Posterior cingulate gyrus (tissue), 11 donors: ENCODE measurements at regions of chr15 and their contacts with region 1.

Region 1: DNA sequence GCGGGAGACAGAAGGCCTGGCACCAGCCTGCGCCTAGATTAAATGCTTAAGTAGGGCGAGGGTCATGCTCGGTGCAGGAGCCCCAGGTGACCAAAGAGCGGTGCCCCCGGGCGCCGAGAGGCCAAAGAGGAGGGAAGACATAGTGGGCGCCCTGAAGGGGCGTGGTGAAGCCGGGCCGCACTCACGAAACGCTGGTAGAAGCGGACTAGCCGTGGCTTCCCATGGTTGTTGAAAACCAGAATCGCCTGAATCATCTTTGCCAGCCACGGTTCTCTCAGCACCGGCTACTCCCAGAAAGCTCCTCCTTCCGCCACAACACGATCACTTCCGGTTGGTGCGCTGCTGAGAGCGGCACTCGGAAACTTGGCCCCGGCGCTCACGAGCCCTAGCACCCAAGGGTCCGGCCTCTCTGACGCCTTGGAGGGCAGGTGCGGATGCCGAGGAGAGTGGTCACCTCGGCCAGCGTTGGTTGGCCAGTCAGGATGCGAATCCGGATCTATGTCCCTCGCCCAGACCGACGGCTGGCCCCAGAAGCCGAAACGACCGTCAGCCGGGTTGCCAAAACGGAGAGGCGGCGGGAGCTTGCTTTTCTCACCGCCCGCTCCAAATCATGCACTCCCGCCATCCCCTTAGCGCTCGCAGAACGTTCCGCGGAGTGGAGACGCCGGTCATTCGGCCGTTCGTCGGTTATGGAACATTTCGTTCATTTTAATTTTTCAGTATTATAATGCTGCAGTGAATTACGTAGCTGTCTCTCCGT is at the start of gene AP3S2:
- DNase-seq: peak; percentile 84 to 98 (median 92)

Region 2: DNA sequence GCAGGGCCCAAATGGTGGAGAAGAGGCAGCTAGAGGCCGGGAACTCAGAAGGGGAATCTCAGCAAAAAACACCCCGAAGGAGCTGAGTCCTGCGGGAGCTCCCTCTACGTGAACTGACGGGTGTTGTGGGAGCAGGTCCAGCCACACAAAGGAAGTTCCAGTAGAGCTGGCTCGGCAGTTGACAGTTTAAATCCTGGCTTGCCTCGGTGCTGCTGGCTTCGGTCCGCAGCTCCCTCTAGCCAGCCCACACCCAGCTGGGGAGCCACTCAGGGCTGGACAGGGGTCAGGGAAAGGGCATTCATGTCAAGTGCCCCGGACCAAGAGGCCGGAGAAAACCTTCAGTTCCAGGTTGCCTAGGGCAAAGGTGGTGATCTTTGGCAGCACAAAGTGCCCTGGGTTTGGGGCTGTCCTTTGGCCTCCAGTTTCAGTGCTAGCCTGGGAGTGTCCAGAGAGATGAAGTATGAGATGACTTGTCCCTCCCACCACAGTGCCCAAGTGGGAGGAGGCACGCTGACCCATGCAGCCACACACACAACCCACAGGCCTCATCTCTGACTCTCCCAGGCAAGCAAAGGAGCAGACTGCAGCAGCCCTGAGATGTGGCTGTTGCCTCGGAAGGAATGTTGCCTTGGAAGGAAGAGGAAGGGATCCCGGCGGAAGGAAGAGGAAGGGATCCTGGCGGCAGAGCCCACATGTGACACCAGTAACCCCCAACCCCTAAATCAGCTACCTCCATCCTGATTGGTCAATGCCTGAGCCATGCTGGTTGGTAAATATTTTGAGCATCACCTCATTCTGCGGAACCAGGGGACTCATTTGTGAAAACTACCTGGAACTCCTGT is 65.4 kb before region 1 on chr15:
- intact Hi-C with region 1: no loop called
- DNase-seq: peak in 2 of 10 donors; percentile 78 to 82

Region 3: GRCh38 chr15:90001683-90002427 is 108.0 kb after region 1 on chr15:
- intact Hi-C with region 1: loop called (anchors 10 kb)
- DNase-seq: peak in 5 of 10 donors; percentile 18 to 87 (median 31)

Region 4: GRCh38 chr15:90071208-90071807 is 177.4 kb after region 1 on chr15:
- intact Hi-C with region 1: loop called (anchors 5 kb)
- DNase-seq: peak in 7 of 10 donors; percentile 74 to 95 (median 79)

Region 5: GRCh38 chr15:90099868-90100831 is 206.3 kb after region 1 on chr15:
- intact Hi-C with region 1: no loop called
- DNase-seq: peak in 8 of 10 donors; percentile 45 to 93 (median 63)